ENCODE measurements at regions of chr11 and their contacts with region 1.

Region 1: GRCh38 chr11:94623120-94623735 is 56.1 kb downstream of the PIWIL4 start:
- DNase-seq: no peak
- ATAC-seq: peak; percentile 99
- H3K4me3 ChIP-seq: no peak overlapping the region
- H3K27ac ChIP-seq: no peak overlapping the region
- H3K4me1 ChIP-seq: no peaks in the 10 kb centered on the region
- H3K27me3 ChIP-seq: no peaks in the 10 kb centered on the region
- CTCF ChIP-seq: peak; percentile 74

Region 2: GRCh38 chr11:94897330-94897768 is 274.1 kb after region 1 on chr11:
- intact Hi-C with region 1: loop called (anchors 10 kb)
- DNase-seq: no peak
- ATAC-seq: peak; percentile 86
- H3K4me3 ChIP-seq: no peak overlapping the region
- H3K27ac ChIP-seq: no peak overlapping the region
- H3K4me1 ChIP-seq: no peaks in the 10 kb centered on the region
- H3K27me3 ChIP-seq: no peaks in the 10 kb centered on the region
- CTCF ChIP-seq: peak; percentile 90